ENCODE measurements at regions of chr10 and their contacts with region 1.

Region 1: DNA sequence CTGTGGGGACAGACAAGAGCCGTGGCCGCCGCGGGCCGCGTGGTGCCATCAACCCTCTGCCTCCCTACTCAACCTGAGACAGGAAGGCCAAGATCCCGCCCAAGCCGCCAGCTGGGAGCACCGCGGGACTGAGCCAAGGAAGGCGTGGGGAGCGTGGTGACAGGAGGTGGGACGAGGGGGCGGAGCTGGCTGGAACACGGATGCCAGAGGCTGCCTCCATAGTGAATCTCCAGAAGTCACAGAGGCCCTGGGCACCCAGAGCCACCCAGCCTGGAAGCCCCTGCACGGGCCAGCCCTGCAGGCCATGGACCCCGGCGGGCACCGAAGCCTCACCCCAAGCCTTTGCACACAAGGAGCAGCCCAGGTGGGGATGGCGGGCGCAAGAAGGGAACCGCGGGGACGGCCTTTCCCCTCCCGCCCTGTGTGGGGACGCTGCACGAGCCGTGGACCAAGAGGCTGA is 18.1 kb upstream of the DPYSL4 start:
- DNase-seq: peak in 4 of 10 donors; percentile 59 to 72 (median 61)
- H3K4me3 ChIP-seq: no peak overlapping the region
- H3K27ac ChIP-seq: peak overlapping the region in 12 of 59 donors; percentile 2 to 33 (median 14)
- H3K27me3 ChIP-seq: no peaks in the 10 kb centered on the region
- CTCF ChIP-seq: no peak

Region 2: DNA sequence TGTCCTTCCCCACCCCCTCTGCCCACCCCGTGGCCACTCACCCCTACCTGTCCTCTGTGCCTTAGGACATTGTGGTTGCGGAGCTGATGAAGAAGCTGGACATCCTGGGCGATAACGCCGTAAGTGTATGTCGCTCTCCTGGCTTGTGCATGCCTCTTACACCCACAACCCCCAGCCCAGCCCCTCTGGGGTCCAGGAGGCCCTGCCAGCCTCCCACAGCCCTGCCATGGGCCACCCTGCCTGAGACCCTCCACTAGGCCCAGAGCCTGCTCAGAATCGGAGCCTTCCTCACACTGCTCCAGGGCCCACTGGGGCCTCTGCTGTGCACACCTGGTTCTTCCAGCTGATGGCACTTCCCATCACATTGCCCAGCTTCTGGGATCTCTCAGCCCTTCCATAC is 18.7 kb before region 1 on chr10:
- intact Hi-C with region 1: loop called in 1 of 2 experiments (anchors 1 kb)
- DNase-seq: peak in 2 of 10 donors; percentile 9 to 37
- H3K4me3 ChIP-seq: no peak overlapping the region
- H3K27ac ChIP-seq: no peak overlapping the region
- H3K27me3 ChIP-seq: no peaks in the 10 kb centered on the region
- CTCF ChIP-seq: no peak